Activated T-helper 2 cell treated with anti-CD3 and anti-CD28 coated beads, Interferon-gamma antibody, Interleukin-2, Interleukin-4, amounts not matched to agents 10 μg/mL and 5 μg/mL and 100 μg/mL, durations not matched to agents 14 hours and 24 hours and 36 hours (primary cell): ENCODE measurements at regions of chr1 and their contacts with region 1.

Region 1: DNA sequence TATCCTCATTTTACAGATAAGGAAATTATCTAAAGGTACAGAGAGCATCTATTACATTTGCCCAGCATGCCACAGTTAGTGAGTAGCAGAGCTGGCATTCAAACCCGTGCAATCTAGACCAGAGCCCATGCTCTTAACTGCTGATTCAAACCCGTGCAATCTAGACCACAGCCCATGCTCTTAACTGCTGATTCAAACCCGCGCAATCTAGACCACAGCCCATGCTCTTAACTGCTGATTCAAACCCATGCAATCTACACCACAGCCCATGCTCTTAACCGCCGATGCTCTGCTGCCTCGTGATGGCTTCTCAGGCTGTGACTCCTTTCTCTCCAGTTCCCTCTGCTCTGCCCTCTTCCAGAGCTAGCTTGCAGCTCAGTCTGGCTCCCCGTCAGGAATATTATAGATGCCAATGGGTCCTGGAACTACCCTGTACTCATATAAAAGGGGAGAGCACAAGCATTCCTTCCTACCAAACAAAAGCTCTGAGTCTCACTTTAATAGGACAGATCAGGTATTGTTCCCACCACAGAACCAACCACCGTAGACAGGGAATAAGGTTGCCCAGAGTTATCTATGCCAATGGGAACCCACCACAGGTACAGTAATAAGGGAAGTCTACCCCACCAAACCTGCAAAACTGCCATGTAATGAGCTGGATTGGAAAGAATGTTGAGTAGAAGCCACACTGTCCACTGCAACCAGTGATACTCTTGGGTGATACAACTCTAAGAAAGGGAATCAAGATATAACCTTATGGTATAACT is 78.4 kb downstream of the SMYD3 start:
- DNase-seq: peak; percentile 16
- H3K4me3 Mint-ChIP-seq: no peak overlapping the region
- H3K27ac Mint-ChIP-seq: no peak overlapping the region
- H3K4me1 Mint-ChIP-seq: peaks cover 26% of the 10 kb centered on the region
- H3K27me3 Mint-ChIP-seq: no peaks in the 10 kb centered on the region

Region 2: GRCh38 chr1:246117066-246117791 is 311.5 kb before region 1 on chr1:
- intact Hi-C with region 1: loop called (anchors 10 kb)
- DNase-seq: peak; percentile 26
- H3K4me3 Mint-ChIP-seq: peak overlapping the region; percentile 60
- H3K27ac Mint-ChIP-seq: peak overlapping the region; percentile 73
- H3K4me1 Mint-ChIP-seq: peaks cover 23% of the 10 kb centered on the region
- H3K27me3 Mint-ChIP-seq: no peaks in the 10 kb centered on the region

Region 3: DNA sequence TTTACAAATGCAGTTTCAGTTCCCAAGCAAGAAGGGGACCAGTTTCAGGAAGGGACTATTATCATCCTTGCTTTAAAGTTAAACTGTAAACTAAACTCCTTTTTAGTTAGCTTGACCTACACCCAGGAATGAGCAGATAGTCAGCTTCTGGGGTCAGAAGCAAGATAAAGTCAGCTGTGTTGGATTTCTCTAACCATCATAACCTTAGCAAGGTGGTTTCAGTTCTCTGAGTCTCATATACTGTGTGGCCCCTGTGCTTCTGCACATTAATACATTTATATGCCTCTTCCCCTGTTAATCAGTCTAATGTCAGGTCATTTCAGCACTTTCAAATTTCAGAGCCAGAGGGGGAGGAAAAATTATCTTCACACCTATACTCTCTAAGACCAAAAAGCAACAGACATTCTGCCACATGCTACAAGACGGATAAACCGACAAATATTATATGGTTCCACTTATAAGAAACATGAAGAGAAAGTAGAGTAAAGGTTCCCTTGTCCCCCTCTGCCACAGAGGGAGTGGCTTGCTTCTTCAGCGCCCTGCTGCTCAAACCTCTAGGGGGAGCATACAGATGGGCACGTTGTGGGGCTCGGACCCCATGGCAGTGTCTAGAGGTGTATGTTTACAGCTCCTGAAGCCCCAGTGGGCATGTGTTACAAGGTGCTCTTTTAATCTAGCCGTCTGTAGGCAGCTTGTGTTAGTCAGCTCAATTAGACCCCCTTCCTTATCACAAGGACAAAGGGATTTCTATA is 10.7 kb before region 1 on chr1:
- intact Hi-C with region 1: loop called (anchors 1 kb)
- DNase-seq: no peak
- H3K4me3 Mint-ChIP-seq: no peak overlapping the region
- H3K27ac Mint-ChIP-seq: no peak overlapping the region
- H3K4me1 Mint-ChIP-seq: peaks cover 15% of the 10 kb centered on the region
- H3K27me3 Mint-ChIP-seq: no peaks in the 10 kb centered on the region